ENCODE measurements at regions of chr4 and their contacts with region 1.

Region 1: GRCh38 chr4:143335979-143336780 is 496 bp upstream of the GAB1 start:
- DNase-seq: peak; percentile 87 to 95
- H3K4me3 ChIP-seq: peak overlapping the region; percentile 62 to 97
- H3K27ac ChIP-seq: peak overlapping the region; percentile 89 to 98
- H3K4me1 ChIP-seq: peaks cover 0 to 33% (median 8%) of the 10 kb centered on the region in 4 donors
- H3K27me3 ChIP-seq: no peaks in the 10 kb centered on the region
- CTCF ChIP-seq: no peak

Region 2: DNA sequence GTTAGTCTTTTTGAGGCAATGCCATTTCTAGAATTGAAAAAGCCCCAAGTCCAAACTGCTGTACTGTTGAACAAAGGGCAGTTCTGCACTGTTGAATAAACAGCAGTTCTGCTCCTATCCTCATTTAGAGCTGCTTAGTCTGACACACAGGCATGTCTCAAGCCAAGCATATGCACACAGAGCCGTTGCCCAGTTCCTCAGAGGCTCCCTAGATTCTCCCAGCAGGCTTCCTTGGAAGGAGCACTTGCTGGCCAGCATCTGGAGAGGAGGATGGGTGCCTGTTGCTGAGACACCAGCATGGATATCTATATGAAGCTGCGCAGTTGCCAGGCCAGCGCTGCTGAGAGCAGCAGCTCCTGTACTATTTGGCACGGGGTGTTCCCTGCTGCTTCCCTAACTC is 289.7 kb before region 1 on chr4:
- intact Hi-C with region 1: no loop called
- DNase-seq: no peak
- H3K4me3 ChIP-seq: no peak overlapping the region
- H3K27ac ChIP-seq: no peak overlapping the region
- H3K4me1 ChIP-seq: no peaks in the 10 kb centered on the region
- H3K27me3 ChIP-seq: no peaks in the 10 kb centered on the region
- CTCF ChIP-seq: no peak

Region 3: GRCh38 chr4:143207557-143207956 is 128.6 kb before region 1 on chr4:
- intact Hi-C with region 1: loop called (anchors 10 kb)
- DNase-seq: no peak
- H3K4me3 ChIP-seq: no peak overlapping the region
- H3K27ac ChIP-seq: no peak overlapping the region
- H3K4me1 ChIP-seq: no peaks in the 10 kb centered on the region
- H3K27me3 ChIP-seq: no peaks in the 10 kb centered on the region
- CTCF ChIP-seq: peak; percentile 34 to 38

Region 4: DNA sequence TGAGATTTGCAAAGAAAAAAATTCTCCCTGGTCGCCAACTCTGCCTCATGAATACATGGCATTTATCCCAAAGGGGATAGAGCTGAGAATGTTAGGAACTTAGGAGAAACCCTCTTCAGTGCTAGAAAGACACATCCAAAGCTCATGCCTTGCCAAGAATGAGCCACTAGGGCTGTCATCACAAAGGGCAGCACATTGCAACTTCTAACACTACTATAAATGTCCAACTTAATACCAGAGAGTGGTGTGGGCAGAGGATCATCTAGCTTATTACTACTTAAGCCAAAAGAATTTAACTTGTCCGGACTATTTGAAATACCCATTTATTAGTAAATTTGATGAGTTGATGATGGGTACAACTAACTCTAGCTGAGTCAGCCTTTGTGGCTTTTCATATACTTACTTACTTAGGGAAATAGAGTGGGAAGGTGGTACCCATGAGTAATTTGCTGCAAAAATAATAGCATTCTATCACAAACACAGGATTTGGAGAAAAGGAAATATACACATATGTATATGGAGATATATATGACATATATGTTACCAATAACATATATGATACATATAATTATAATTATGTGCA is 65.8 kb before region 1 on chr4:
- intact Hi-C with region 1: no loop called
- DNase-seq: no peak
- H3K4me3 ChIP-seq: no peak overlapping the region
- H3K27ac ChIP-seq: no peak overlapping the region
- H3K4me1 ChIP-seq: no peaks in the 10 kb centered on the region
- H3K27me3 ChIP-seq: no peaks in the 10 kb centered on the region
- CTCF ChIP-seq: no peak

Region 5: GRCh38 chr4:143281507-143282190 is 54.5 kb before region 1 on chr4:
- intact Hi-C with region 1: loop called (anchors 2 kb)
- DNase-seq: no peak
- H3K4me3 ChIP-seq: no peak overlapping the region
- H3K27ac ChIP-seq: no peak overlapping the region
- H3K4me1 ChIP-seq: peaks cover 0 to 13% (median 5%) of the 10 kb centered on the region in 4 donors
- H3K27me3 ChIP-seq: no peaks in the 10 kb centered on the region
- CTCF ChIP-seq: no peak

Region 6: GRCh38 chr4:143320113-143320512 is 16.1 kb before region 1 on chr4:
- intact Hi-C with region 1: no loop called
- DNase-seq: no peak
- H3K4me3 ChIP-seq: no peak overlapping the region
- H3K27ac ChIP-seq: no peak overlapping the region
- H3K4me1 ChIP-seq: peaks cover 0 to 8% (median 0%) of the 10 kb centered on the region in 4 donors
- H3K27me3 ChIP-seq: no peaks in the 10 kb centered on the region
- CTCF ChIP-seq: no peak

Region 7: GRCh38 chr4:143375313-143376073 is 39.3 kb after region 1 on chr4:
- intact Hi-C with region 1: loop called (anchors 2 kb)
- DNase-seq: no peak
- H3K4me3 ChIP-seq: no peak overlapping the region
- H3K27ac ChIP-seq: peak overlapping the region; percentile 66 to 71
- H3K4me1 ChIP-seq: peaks cover 0 to 85% (median 66%) of the 10 kb centered on the region in 4 donors
- H3K27me3 ChIP-seq: no peaks in the 10 kb centered on the region
- CTCF ChIP-seq: peak; percentile 38 to 40

Region 8: DNA sequence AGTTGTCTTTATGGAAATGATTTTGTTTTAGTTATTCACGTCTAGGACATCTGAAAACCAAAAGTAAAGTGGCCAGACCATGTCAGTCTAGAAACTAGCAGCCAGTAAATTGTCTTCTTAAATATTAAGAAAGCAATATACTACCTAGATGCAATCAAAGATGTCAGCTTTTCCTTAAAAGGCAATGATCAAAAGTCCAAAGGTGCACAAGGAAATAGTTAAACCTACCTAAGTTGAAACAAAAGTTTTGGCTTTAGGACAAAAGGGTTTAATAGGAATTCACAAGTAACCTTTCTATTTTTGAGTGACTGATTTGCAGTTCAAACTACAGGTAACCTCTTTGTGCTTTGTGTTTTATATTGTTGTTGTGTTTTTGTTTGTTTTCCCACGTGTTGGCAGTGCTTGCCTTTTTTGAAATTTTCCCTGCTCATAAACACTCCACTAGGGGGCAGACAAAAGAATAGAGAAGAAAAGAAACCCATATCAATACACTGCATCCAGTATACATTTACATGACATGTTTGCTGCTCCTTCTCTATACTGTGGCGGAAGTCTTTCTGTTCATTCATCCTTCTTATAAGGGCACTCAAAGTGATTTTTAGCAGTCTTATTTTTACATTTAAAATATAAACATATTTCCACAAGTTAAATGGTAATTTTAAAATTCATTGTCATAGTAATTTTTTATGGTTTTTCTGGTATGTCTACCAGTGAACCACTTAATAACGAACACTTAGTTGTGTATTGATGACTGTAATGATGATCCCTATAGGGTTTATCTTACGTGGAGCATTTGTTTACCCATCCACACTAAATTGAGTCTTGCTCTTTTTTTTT is 63.2 kb after region 1 on chr4:
- intact Hi-C with region 1: loop called (anchors 5 kb)
- DNase-seq: no peak
- H3K4me3 ChIP-seq: no peak overlapping the region
- H3K27ac ChIP-seq: peak overlapping the region; percentile 12 to 36
- H3K4me1 ChIP-seq: peaks cover 0 to 88% (median 47%) of the 10 kb centered on the region in 4 donors
- H3K27me3 ChIP-seq: no peaks in the 10 kb centered on the region
- CTCF ChIP-seq: peak; percentile 48 to 57

Region 9: GRCh38 chr4:143482840-143483239 is 146.7 kb after region 1 on chr4:
- intact Hi-C with region 1: loop called (anchors 10 kb)
- DNase-seq: no peak
- H3K4me3 ChIP-seq: no peak overlapping the region
- H3K27ac ChIP-seq: no peak overlapping the region
- H3K4me1 ChIP-seq: no peaks in the 10 kb centered on the region
- H3K27me3 ChIP-seq: no peaks in the 10 kb centered on the region
- CTCF ChIP-seq: peak; percentile 66 to 71